Sciatic nerve (tissue), 2 donors: ENCODE measurements at regions of chrX and their contacts with region 1.

Region 1: DNA sequence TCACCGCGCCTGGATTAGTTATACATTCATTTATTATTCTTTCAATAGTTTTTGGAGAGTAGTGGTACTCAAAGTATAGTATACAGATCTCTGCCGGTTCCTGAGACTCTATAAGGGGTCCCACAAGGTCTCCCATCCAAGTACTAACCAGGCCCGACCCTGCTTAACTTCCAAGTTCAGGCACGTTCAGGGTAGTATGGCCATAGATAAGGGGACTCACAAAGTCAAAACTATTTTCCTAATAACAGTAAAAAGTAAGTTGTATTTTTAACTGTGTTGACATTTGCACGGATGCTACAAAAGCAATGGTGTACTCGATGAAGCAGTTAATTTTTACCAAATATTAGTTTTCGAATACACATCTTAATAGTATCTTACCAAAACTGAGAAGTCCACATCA is 84.4 kb upstream of the STK26 start:
- DNase-seq: no peak
- ATAC-seq: no peak

Region 2: DNA sequence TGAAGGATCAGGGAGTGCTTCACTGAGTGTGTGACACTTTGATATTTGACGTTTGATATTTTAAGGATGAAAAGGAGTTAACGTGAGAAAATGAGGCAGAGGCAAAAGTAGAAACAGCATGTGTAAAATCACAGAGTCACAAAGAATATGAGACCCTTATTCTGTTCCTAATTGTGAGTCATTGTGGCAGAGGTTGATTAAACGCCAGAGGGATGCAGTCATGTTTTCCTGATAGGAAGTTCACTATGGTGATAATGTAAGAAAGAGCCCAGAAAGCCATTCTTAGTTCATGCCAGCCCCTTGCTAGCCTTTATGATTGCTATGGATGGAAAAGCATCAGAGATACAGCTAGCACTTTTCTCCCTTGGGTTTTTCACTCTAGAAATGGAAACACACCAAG is 616.1 kb before region 1 on chrX:
- intact Hi-C with region 1: loop called (anchors 5 kb)
- DNase-seq: no peak
- ATAC-seq: no peak